ENCODE measurements at regions of chr10 and their contacts with region 1.

Region 1: GRCh38 chr10:931416-932318 is at the start of gene LARP4B:
- DNase-seq: peak; percentile 98 to 99
- ATAC-seq: peak; percentile 95 to 98 (median 98)
- H3K4me3 ChIP-seq: peak within 1 kb of the TSS; percentile 73
- H3K27ac ChIP-seq: peak within 1 kb of the TSS; percentile 96
- H3K4me1 ChIP-seq: peaks cover 41% of the 10 kb centered on the region
- H3K27me3 ChIP-seq: no peaks in the 10 kb centered on the region
- CTCF ChIP-seq: no peak
- total RNA-seq, gene LARP4B: 66.6 to 88.3 (median 79.6) TPM

Region 2: DNA sequence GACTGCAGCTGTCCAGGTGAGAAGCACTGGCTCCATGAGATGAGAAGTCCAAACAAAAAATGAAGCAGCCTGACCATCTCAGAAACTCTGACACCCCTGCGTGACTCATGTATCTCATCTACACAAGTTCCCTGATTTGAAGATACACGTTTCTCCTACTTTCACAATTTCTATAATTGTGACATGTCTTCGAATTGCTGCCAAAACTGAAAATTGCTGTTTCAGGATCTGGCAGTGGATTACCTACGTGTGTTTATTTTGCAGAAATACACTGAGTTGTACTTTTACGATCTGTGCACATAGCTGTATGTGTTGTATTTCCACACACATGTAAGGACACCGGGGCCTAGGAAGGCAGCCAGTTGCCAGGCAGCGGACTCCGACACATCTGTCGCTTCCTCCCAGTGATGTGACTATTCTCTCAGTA is 53.3 kb before region 1 on chr10:
- intact Hi-C with region 1: loop called in 1 of 2 experiments (anchors 5 kb)
- DNase-seq: peak; percentile 43 to 84
- ATAC-seq: peak; percentile 61 to 88 (median 82)
- H3K4me3 ChIP-seq: no peak overlapping the region
- H3K27ac ChIP-seq: peak overlapping the region; percentile 56
- H3K4me1 ChIP-seq: peaks cover 33% of the 10 kb centered on the region
- H3K27me3 ChIP-seq: no peaks in the 10 kb centered on the region
- CTCF ChIP-seq: no peak

Region 3: GRCh38 chr10:987870-988666 is 56.4 kb after region 1 on chr10 and contains the start of gene GTPBP4:
- intact Hi-C with region 1: loop called (anchors 5 kb)
- DNase-seq: peak; percentile 99 to 100
- ATAC-seq: peak; percentile 98 to 99 (median 98)
- H3K4me3 ChIP-seq: peak within 1 kb of the TSS; percentile 94
- H3K27ac ChIP-seq: peak within 1 kb of the TSS; percentile 96
- H3K4me1 ChIP-seq: peaks cover 20% of the 10 kb centered on the region
- H3K27me3 ChIP-seq: no peaks in the 10 kb centered on the region
- CTCF ChIP-seq: no peak
- total RNA-seq, gene GTPBP4: 36.3 to 77.4 (median 68.5) TPM

Region 4: GRCh38 chr10:1048732-1049424 is 117.2 kb after region 1 on chr10 and contains the start of gene IDI1:
- intact Hi-C with region 1: loop called (anchors 5 to 10 kb)
- DNase-seq: peak; percentile 97 to 99
- ATAC-seq: peak; percentile 88 to 91 (median 90)
- H3K4me3 ChIP-seq: peak within 1 kb of the TSS; percentile 89
- H3K27ac ChIP-seq: peak within 1 kb of the TSS; percentile 98
- H3K4me1 ChIP-seq: peaks cover 47% of the 10 kb centered on the region
- H3K27me3 ChIP-seq: no peaks in the 10 kb centered on the region
- CTCF ChIP-seq: no peak
- total RNA-seq, gene IDI1: 49.3 to 61.3 (median 55.3) TPM

Region 5: DNA sequence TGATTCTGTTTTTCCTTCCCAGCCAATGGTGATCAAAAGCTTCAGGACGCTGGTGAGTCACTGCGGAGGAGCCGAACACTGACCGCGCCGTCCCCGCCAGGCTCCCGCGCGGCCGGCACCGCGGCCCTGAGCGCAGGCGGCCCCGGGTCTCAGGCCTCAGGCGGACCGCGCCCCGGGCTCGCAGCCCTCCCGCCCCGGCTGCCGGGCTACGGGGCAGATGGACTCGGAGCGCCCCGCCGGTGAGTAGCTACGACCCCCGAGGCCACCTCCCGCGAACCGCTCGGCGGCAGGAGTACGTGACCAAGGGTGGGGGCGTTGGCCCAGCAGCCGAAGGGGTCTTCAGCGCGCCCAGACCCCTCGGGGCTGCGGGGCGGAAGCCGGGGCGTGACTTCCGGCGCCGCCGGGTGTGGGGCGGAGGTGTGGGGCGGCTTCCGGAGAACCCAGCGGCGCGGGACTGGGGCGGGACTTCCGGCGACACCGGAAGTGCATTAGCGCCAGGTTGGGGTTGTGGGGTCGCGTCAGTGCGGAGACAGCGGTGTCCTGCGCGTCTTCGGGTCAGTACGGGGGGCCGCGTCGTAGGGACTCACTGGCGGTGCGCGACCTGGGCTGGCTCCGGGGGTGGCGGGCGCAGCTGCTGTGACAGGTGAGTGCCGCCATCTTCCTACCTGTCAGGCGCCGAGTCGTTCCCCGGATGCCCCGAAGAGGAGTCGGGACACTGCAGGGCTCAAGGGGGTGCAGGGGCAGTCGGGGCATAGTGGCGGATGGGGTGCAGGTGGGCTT is 124.8 kb after region 1 on chr10 and contains the start of gene WDR37:
- intact Hi-C with region 1: loop called (anchors 5 to 10 kb)
- DNase-seq: peak; percentile 91 to 95
- ATAC-seq: peak; percentile 96 to 97 (median 96)
- H3K4me3 ChIP-seq: peak within 1 kb of the TSS; percentile 96
- H3K27ac ChIP-seq: peak within 1 kb of the TSS; percentile 100
- H3K4me1 ChIP-seq: peaks cover 50% of the 10 kb centered on the region
- H3K27me3 ChIP-seq: no peaks in the 10 kb centered on the region
- CTCF ChIP-seq: no peak
- total RNA-seq, gene WDR37: 17.2 to 28.3 (median 21.4) TPM

Measured in psoas muscle (tissue), 8 donors.